ENCODE measurements at regions of chr19 and their contacts with region 1.

Region 1: GRCh38 chr19:44723952-44724319 is 24.6 kb upstream of the BCL3 start:
- DNase-seq: peak; percentile 61 to 86
- H3K4me3 ChIP-seq: no peak overlapping the region
- H3K4me1 ChIP-seq: peaks cover 4% of the 10 kb centered on the region
- H3K27me3 ChIP-seq: no peaks in the 10 kb centered on the region

Region 2: GRCh38 chr19:44304659-44305193 is 419.2 kb before region 1 on chr19 and contains the start of gene ZNF235:
- in situ Hi-C with region 1: no loop called
- DNase-seq: peak; percentile 88 to 89
- H3K4me3 ChIP-seq: peak within 1 kb of the TSS; percentile 75
- H3K4me1 ChIP-seq: peaks cover 6% of the 10 kb centered on the region
- H3K27me3 ChIP-seq: no peaks in the 10 kb centered on the region

Region 3: DNA sequence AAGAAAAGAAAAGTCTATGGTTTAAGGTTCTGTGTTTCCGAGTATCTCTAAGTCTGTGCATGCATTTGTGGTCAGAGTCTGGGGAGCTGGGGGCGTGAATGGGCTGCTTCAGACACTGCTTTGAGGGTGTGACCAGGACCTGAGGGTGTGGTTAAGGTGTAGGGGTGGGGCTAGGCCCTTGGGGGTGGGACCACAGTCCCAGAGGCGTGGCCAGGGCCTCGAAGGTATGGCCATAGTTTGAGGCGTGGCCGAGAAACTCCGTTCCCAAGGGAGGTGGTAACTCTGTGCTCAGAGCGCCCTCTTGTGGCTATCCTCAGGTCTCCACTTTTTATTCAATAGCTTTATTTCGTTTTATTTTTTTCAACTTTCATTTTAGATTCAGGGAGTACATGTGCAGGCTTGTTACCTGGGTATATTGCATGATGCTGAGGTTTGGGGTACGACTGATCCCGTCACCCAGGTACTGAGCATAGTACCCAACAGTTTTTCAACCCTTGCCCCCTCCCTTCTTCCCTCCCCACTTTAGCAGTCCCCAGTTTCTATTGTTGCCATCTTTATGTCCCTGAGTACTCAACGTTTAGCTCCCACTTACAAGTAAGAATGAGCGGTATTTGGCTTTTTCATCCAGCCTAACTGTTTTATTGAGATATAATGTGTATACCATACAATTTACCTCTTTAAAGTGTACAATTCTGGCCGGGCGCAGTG is 46.8 kb after region 1 on chr19:
- in situ Hi-C with region 1: loop called (anchors 5 kb)
- DNase-seq: peak; percentile 96
- H3K4me3 ChIP-seq: no peak overlapping the region
- H3K4me1 ChIP-seq: peaks cover 4% of the 10 kb centered on the region
- H3K27me3 ChIP-seq: no peaks in the 10 kb centered on the region

Region 4: DNA sequence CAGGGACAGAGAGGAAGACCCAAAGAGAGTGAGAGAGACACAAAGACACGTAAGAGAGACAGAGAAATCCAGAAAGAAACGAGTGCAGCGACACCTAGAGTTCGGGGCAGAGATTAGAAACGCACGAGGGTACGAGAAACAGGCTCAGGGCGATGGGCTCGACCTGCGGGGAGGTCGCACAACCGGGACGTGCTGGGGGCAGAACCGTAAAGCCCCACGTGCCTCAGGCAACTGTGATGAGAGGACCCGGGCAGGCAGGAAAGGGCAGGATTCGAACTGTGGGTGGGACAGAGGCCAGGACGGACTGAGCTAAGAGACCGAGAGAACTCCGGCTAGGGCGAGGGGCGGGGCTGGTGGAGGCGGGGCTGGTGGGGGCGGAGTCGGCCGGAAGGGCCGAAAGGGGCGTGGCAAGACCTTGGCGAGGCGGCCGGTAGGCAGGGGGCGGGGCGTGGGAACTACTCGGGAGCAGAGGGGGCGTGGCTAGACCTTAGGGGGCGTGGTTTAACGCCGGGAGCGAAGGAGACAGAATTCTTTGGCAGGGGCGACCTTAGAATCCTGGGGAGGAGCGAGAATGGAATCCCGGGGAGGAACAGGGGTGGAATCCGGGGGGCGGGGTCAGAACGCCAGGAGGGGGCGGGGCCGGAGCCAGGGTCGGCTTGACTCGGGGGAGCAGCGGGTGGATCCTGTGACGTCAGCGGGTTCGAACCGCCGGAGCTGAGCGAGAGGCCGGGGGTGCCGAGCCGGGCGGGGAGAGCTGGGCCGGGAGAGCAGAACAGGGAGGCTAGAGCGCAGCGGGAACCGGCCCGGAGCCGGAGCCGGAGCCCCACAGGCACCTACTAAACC is 121.9 kb after region 1 on chr19 and contains the start of gene NECTIN2:
- in situ Hi-C with region 1: loop called (anchors 10 kb)
- DNase-seq: peak; percentile 95 to 100
- H3K4me3 ChIP-seq: peak within 1 kb of the TSS; percentile 94
- H3K4me1 ChIP-seq: peaks cover 19% of the 10 kb centered on the region
- H3K27me3 ChIP-seq: no peaks in the 10 kb centered on the region

Measured in HAP-1 (cell line).